Psoas muscle (tissue), 8 donors: ENCODE measurements at regions of chr6 and their contacts with region 1.

Region 1: DNA sequence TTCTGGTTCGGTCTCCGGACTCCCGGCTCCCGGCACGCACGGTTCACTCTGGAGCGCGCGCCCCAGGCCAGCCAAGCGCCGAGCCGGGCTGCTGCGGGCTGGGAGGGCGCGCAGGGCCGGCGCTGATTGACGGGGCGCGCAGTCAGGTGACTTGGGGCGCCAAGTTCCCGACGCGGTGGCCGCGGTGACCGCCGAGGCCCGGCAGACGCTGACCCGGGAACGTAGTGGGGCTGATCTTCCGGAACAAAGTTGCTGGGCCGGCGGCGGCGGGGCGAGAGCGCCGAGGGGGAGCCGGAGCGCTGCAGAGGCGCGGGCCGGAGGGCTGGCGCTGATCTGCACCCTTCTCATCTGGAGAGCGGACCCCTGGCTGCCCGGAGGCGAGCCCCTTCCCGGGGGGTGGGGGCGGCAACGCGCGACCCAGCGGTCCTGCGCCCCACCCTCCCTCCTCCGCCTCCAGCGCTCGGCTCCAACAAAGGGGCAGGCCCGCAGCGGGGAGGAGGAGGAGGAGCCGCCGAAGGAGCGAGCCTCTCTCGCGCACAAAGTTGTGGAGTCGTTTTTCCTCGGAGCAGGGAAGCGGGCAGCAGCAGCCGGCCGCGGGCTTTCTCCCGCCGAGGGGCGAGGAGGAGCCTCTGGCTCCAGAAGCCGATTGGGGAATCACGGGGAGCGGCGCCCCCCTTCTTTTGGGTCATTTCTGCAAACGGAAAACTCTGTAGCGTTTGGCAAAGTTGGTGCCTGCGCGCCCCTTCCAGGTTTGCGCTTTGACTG is at the start of gene UTRN:
- DNase-seq: peak; percentile 85 to 88
- ATAC-seq: peak; percentile 81 to 85 (median 83)
- H3K4me3 ChIP-seq: peak within 1 kb of the TSS; percentile 93
- H3K27ac ChIP-seq: peak within 1 kb of the TSS; percentile 86
- H3K4me1 ChIP-seq: peaks cover 8% of the 10 kb centered on the region
- H3K27me3 ChIP-seq: no peaks in the 10 kb centered on the region
- CTCF ChIP-seq: no peak
- total RNA-seq, gene UTRN: 29.1 to 64.9 (median 43.7) TPM

Region 2: DNA sequence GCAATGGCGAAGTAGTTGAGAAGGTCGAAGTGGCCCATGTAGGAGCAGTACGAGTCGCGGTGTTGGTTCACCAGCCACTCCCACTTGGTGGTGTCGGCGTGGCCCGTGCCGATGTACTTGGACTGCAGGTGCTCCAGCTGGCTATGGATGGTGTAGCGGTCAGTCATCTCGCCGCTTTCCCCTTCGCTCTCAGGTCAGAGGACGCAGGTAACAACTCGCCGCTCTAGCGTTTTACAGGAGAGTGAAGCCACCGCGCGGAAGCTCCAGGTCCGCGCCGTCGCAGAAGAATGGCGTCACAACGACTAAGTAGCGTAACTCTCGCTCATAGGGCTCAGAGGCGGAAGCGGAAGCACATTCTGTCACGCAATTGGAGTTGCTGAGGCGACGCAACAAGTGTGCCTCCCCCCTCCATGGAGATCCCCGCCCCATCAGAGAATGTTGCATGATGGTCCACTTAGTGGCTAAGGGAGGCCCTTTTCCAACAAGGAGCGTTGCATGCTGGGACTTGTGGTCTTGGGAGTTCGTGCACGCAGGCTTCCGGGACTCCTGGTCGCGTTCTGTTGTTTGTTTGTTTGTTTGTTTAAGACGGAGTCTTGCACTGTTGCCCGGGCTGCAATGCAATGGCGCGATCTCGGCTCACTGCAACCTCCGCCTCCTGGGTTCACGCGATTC is 189.5 kb before region 1 on chr6 and contains the start of gene SF3B5:
- intact Hi-C with region 1: loop called in 1 of 2 experiments (anchors 5 kb)
- DNase-seq: peak; percentile 98 to 99
- ATAC-seq: peak; percentile 99 to 100 (median 100)
- H3K4me3 ChIP-seq: peak within 1 kb of the TSS; percentile 95
- H3K27ac ChIP-seq: peak within 1 kb of the TSS; percentile 87
- H3K4me1 ChIP-seq: peaks cover 15% of the 10 kb centered on the region
- H3K27me3 ChIP-seq: no peaks in the 10 kb centered on the region
- CTCF ChIP-seq: no peak
- total RNA-seq, gene SF3B5: 115 to 146 (median 127) TPM

Region 3: GRCh38 chr6:144181639-144182038 is 103.3 kb before region 1 on chr6:
- intact Hi-C with region 1: no loop called
- DNase-seq: no peak
- ATAC-seq: no peak
- H3K4me3 ChIP-seq: no peak overlapping the region
- H3K27ac ChIP-seq: no peak overlapping the region
- H3K4me1 ChIP-seq: no peaks in the 10 kb centered on the region
- H3K27me3 ChIP-seq: no peaks in the 10 kb centered on the region
- CTCF ChIP-seq: no peak

Region 4: GRCh38 chr6:144266091-144266649 is 18.8 kb before region 1 on chr6:
- intact Hi-C with region 1: loop called in 1 of 2 experiments (anchors 1 kb)
- DNase-seq: peak; percentile 75 to 82
- ATAC-seq: peak; percentile 98 to 99 (median 98)
- H3K4me3 ChIP-seq: peak overlapping the region; percentile 9
- H3K27ac ChIP-seq: peak overlapping the region; percentile 74
- H3K4me1 ChIP-seq: peaks cover 24% of the 10 kb centered on the region
- H3K27me3 ChIP-seq: no peaks in the 10 kb centered on the region
- CTCF ChIP-seq: no peak

Region 5: GRCh38 chr6:144334131-144334708 is 49.3 kb after region 1 on chr6:
- intact Hi-C with region 1: loop called in 1 of 2 experiments (anchors 2 kb)
- DNase-seq: peak; percentile 52 to 69
- ATAC-seq: peak; percentile 83 to 89 (median 88)
- H3K4me3 ChIP-seq: peak overlapping the region; percentile 58
- H3K27ac ChIP-seq: peak overlapping the region; percentile 88
- H3K4me1 ChIP-seq: peaks cover 61% of the 10 kb centered on the region
- H3K27me3 ChIP-seq: no peaks in the 10 kb centered on the region
- CTCF ChIP-seq: no peak

Region 6: DNA sequence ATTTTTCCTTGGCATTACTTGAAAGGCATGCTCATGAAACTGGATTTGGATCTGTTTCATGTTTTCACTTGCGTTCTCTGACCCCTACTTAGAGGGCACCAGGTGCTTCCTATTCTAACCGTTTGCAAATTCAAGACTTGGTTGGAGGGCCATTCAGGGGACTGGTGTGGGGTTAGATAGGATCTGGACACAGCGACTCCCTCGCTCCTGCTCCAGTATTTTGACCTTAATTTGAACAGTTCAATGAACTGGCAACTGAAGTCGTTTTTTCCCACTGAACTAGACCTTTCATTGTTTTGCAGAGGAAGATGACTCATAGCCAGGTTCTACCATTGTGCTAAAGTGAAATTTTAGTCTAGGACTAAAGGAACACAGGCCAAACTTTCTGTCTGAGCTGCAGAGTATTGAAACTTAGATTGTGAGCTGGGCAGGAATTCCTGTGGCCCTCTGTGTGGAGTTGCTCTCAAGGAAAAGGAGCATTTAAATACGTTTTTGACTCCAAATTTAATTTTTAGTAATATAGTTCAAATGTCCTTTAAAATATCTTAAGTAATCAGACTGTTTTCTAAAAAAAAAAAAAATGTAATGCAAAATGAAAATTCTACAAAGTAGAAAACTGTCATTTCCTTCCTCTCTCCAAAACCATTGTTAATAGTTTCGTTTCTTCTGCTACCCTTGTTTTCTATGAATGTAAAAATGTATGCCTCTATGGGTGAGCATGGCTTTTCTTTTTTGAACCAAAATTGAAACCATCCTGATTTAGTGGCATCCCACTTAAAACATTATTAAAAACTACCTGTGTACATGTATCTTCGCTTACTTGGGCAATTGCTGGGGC is 64.9 kb after region 1 on chr6:
- intact Hi-C with region 1: loop called in 1 of 2 experiments (anchors 5 kb)
- DNase-seq: no peak
- ATAC-seq: peak in 2 of 4 donors; percentile 27 to 41
- H3K4me3 ChIP-seq: no peak overlapping the region
- H3K27ac ChIP-seq: peak overlapping the region; percentile 31
- H3K4me1 ChIP-seq: peaks cover 54% of the 10 kb centered on the region
- H3K27me3 ChIP-seq: no peaks in the 10 kb centered on the region
- CTCF ChIP-seq: no peak

Region 7: DNA sequence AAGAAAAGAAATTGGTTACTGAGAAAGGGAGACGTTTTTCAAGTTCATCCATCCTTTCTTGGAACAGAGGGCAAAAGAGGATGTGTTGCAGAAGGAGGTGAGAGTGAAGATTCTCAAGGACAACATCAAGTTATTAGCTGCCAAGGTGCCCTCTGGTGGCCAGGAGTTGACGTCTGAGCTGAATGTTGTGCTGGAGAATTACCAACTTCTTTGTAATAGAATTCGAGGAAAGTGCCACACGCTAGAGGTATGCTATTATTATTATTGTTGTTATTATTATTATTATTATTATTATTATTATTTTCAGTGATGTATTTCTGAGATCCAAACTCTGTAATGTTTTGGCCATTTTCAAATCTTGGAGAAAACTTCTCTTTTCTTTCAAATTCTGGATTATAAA is 197.2 kb after region 1 on chr6:
- intact Hi-C with region 1: loop called (anchors 5 kb)
- DNase-seq: peak; percentile 74 to 83
- ATAC-seq: peak; percentile 27 to 57 (median 54)
- H3K4me3 ChIP-seq: no peak overlapping the region
- H3K27ac ChIP-seq: no peak overlapping the region
- H3K4me1 ChIP-seq: peaks cover 32% of the 10 kb centered on the region
- H3K27me3 ChIP-seq: no peaks in the 10 kb centered on the region
- CTCF ChIP-seq: peak; percentile 60